Ascending aorta (tissue), 2 donors: ENCODE measurements at regions of chr2 and their contacts with region 1.

Region 1: GRCh38 chr2:73828818-73829570 is at the start of gene STAMBP:
- DNase-seq: peak; percentile 86 to 98
- H3K4me3 ChIP-seq: peak within 1 kb of the TSS; percentile 81 to 91
- H3K27ac ChIP-seq: peak within 1 kb of the TSS; percentile 98 to 99
- H3K4me1 ChIP-seq: peaks cover 3 to 10% of the 10 kb centered on the region in 2 donors
- H3K27me3 ChIP-seq: no peaks in the 10 kb centered on the region
- CTCF ChIP-seq: no peak
- total RNA-seq, gene STAMBP: 36.4 TPM

Region 2: DNA sequence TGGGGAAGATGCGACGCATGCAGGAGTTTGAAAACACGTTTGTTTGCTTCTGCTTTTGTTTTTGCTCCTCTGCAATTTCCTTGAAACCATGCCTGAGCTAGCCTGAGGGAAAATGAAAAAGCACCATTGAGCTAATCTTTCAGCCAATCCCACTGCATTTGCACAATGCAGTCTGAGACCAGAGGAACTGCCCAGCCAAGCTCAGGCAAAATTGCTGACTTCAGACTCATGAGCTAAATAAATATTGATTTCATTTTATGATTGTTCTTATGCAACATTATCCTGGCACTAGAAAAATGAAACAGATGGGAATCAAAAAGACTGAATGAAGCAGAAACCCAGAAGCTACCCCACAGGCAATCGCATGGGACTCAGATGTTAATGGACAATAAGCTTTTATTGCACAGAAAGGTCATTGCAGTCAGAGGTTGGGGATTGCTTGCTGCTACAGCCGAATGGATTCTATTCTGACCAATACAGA is 128.8 kb before region 1 on chr2:
- intact Hi-C with region 1: no loop called
- DNase-seq: no peak
- H3K4me3 ChIP-seq: no peak overlapping the region
- H3K27ac ChIP-seq: no peak overlapping the region
- H3K4me1 ChIP-seq: no peaks in the 10 kb centered on the region
- H3K27me3 ChIP-seq: no peaks in the 10 kb centered on the region
- CTCF ChIP-seq: no peak

Region 3: GRCh38 chr2:73736855-73737779 is 91.9 kb before region 1 on chr2 and contains the start of gene TPRKB:
- intact Hi-C with region 1: loop called (anchors 1 kb)
- DNase-seq: peak; percentile 84 to 98
- H3K4me3 ChIP-seq: peak within 1 kb of the TSS; percentile 73 to 79
- H3K27ac ChIP-seq: peak within 1 kb of the TSS; percentile 64 to 73
- H3K4me1 ChIP-seq: peaks cover 0 to 16% of the 10 kb centered on the region in 2 donors
- H3K27me3 ChIP-seq: no peaks in the 10 kb centered on the region
- CTCF ChIP-seq: no peak
- total RNA-seq, gene TPRKB: 11.1 TPM

Region 4: GRCh38 chr2:73926493-73927338 is 97.7 kb after region 1 on chr2 and contains the start of gene DGUOK:
- intact Hi-C with region 1: loop called (anchors 1 kb)
- DNase-seq: peak; percentile 96 to 99
- H3K4me3 ChIP-seq: peak within 1 kb of the TSS; percentile 76 to 83
- H3K27ac ChIP-seq: peak within 1 kb of the TSS; percentile 95 to 97
- H3K4me1 ChIP-seq: peaks cover 3 to 28% of the 10 kb centered on the region in 2 donors
- H3K27me3 ChIP-seq: no peaks in the 10 kb centered on the region
- CTCF ChIP-seq: no peak
- total RNA-seq, gene DGUOK: 79.7 TPM

Region 5: GRCh38 chr2:74002487-74003391 is 173.7 kb after region 1 on chr2:
- intact Hi-C with region 1: loop called (anchors 1 kb)
- DNase-seq: peak in 1 of 2 donors; percentile 90
- H3K4me3 ChIP-seq: peak overlapping the region; percentile 59 to 69
- H3K27ac ChIP-seq: peak overlapping the region; percentile 28 to 48
- H3K4me1 ChIP-seq: peaks cover 0 to 21% of the 10 kb centered on the region in 2 donors
- H3K27me3 ChIP-seq: no peaks in the 10 kb centered on the region
- CTCF ChIP-seq: peak in 1 of 3 experiments; percentile 30

Region 6: DNA sequence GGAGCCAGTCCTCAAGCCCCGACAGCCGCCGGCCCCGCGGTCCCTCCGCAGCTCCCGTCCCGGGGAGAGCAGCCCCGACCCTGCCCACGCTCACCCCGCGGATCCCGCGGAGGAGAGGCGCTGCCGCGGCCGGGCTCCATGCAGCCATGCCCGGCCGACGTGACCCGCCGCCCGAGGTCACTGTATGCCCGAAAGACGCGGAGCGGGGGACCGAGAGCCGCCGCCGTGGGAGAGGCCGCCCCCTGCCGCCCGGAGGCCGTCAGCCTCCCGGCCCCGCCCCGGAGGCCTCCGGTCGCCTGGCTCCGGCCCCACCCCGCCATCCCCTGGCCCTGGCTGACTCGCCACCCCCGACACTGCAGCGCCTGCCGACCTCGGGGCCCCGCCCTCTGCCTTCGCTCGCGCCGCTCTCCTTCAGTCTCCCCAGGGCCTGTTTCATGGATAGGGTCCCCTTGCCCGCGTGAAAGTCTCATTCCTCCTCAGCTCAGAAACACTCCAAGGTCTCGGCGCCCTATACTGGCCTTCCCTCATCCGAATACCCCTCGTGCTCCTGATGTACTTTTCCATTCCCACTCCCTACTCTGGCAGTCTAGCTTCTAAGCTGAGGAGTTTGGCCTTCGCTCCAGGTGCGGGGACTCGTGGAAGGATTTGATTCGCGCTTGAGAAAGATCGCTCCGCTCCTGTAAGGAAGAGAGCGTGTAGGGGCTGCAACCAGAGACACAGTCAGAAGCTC is 318.9 kb after region 1 on chr2 and contains the start of gene BOLA3:
- intact Hi-C with region 1: loop called (anchors 2 kb)
- DNase-seq: peak; percentile 33 to 89
- H3K4me3 ChIP-seq: peak within 1 kb of the TSS; percentile 67 to 80
- H3K27ac ChIP-seq: peak within 1 kb of the TSS; percentile 54 to 74
- H3K4me1 ChIP-seq: peaks cover 5 to 19% of the 10 kb centered on the region in 2 donors
- H3K27me3 ChIP-seq: no peaks in the 10 kb centered on the region
- CTCF ChIP-seq: peak; percentile 50 to 68 (median 61)
- total RNA-seq, gene BOLA3: 47.3 TPM

Region 7: GRCh38 chr2:74198461-74199274 is 369.7 kb after region 1 on chr2 and contains the start of gene MTHFD2:
- intact Hi-C with region 1: loop called (anchors 1 kb)
- DNase-seq: peak; percentile 87 to 97
- H3K4me3 ChIP-seq: peak within 1 kb of the TSS; percentile 82 to 90
- H3K27ac ChIP-seq: peak within 1 kb of the TSS; percentile 97 to 98
- H3K4me1 ChIP-seq: peaks cover 15 to 23% of the 10 kb centered on the region in 2 donors
- H3K27me3 ChIP-seq: no peaks in the 10 kb centered on the region
- CTCF ChIP-seq: peak; percentile 83 to 90 (median 86)
- total RNA-seq, gene MTHFD2: 31.7 TPM

Region 8: DNA sequence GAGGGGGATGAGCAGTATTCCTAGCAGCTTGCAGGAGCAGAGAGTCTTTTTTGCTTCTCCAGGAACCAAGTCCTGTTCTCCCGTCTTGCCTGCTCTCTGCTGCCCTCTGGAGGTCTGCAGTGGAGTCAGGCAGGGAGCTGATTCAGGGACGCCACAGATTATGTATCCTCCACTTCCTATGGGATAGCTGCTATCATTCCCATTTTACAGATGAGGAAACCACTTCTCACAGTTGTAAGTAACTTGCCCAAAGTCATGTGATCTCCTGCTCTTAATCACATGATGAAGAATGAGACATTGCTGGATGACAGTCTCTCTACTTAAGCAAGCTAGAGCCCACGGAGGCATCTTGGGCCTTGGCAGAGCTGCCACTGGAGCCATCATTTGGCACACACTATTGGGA is 505.9 kb after region 1 on chr2:
- intact Hi-C with region 1: loop called (anchors 5 kb)
- DNase-seq: peak in 1 of 2 donors; percentile 82
- H3K4me3 ChIP-seq: no peak overlapping the region
- H3K27ac ChIP-seq: no peak overlapping the region
- H3K4me1 ChIP-seq: no peaks in the 10 kb centered on the region
- H3K27me3 ChIP-seq: no peaks in the 10 kb centered on the region
- CTCF ChIP-seq: peak; percentile 76 to 96 (median 93)